GM12878 (cell line): ENCODE measurements at regions of chr1 and their contacts with region 1.

Region 1: DNA sequence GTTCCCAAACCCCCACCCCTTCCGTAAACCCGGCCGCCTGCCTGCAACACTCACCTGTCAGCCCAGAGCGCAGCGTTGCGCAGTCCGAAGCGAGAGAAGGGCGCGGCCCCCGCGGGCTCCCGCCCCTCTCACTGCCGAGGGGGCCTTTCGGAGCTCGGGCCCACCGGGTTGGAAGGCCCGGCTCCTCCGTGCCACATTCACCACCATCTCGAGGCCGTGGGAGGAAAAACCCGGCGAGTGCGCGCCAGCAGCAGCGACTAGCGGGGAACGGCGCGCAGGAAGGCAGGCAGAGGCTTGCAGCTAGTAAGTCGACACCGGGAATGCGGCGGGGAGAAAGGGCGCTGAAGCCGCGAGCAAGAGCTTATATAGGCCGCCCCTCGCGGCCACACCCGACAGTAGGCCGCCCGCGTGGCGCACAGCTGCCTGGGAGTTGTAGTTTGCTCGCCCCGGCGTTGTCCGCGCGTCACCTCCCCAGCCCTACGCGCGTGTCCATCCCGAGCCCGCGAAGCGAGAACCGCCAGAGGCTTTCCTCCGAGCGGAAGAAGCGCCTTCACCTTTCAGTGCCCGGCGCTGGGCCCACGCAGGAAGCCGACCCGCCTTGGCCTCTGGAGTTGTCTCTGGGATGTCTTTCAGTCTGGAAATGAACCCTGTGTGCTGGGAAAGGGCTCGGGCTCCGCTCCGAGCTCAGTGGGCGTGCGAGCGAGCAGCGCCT is 10.4 kb upstream of the RAB42 start:
- DNase-seq: peak; percentile 78
- ATAC-seq: peak; percentile 91
- H3K4me3 ChIP-seq: peak overlapping the region; percentile 99
- H3K27ac ChIP-seq: peak overlapping the region; percentile 55
- H3K4me1 ChIP-seq: peaks cover 14% of the 10 kb centered on the region
- H3K27me3 ChIP-seq: no peaks in the 10 kb centered on the region
- CTCF ChIP-seq: peak in 1 of 3 experiments; percentile 7; a peak in 1 of 6 replicates
- EP300 ChIP-seq: 0 out of 4 replicates have a peak, but pooled peaks of 1 of the 2 experiments have one; percentile 22
- POLR2A ChIP-seq: peak; percentile 100
- RAD21 ChIP-seq: no peak

Region 2: GRCh38 chr1:28235755-28236655 is 345.7 kb before region 1 on chr1 and contains the start of gene ATP5IF1:
- CTCF ChIA-PET with region 1: no interaction called
- POLR2A ChIA-PET with region 1: interaction called, 10 read pairs
- RAD21 ChIA-PET with region 1: interaction called, 3 read pairs
- SMC1A ChIA-PET with region 1: no interaction called
- in situ Hi-C with region 1: no loop called
- intact Hi-C with region 1: no loop called
- DNase-seq: peak; percentile 96
- ATAC-seq: peak; percentile 94
- H3K4me3 ChIP-seq: peak within 1 kb of the TSS; percentile 71
- H3K27ac ChIP-seq: peak within 1 kb of the TSS; percentile 86
- H3K4me1 ChIP-seq: peaks cover 10% of the 10 kb centered on the region
- H3K27me3 ChIP-seq: no peaks in the 10 kb centered on the region
- CTCF ChIP-seq: no peak
- EP300 ChIP-seq: no peak
- POLR2A ChIP-seq: peak; percentile 99
- RAD21 ChIP-seq: no peak
- polyA plus RNA-seq, gene ATP5IF1: 296 to 883 TPM

Region 3: DNA sequence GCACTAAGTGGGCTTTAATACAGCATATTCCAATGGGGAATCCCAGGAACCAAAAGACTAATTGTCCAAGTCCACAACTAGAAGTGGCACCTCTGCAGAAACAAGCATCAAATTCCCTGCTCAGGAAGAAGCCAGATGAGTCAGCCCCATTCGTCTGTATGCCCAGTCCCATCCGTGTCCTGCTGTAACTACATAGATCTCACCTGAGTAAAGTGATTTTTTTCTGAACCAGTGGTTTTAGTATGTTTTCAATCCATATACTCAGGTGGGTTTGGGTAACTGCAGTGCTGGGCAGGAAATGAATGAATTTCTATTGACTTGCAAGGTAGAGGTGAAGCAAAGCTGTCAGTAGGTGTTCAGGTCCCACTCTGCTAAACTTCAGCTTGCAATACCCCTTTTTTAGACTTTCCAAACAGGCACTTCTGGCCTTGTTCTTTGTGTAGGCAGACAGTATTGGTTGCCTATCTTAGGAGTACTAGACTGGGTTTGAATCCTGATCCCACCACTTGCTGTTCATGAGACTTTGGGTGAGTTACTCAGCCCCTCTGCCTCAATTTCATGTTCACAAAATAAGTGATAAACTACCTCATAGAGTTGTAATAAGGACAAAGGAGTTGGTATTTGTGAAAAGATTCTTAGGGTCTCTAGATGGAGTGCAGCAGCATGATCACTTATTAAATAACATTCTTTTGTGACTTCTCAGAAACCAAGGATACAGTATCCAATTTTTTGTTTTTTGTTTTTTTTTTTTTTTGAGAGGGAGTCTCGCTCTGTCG is 70.8 kb before region 1 on chr1:
- CTCF ChIA-PET with region 1: interaction called, 49 read pairs
- POLR2A ChIA-PET with region 1: interaction called, 81 read pairs
- RAD21 ChIA-PET with region 1: interaction called, 5 read pairs
- SMC1A ChIA-PET with region 1: interaction called, 47 read pairs
- in situ Hi-C with region 1: no loop called
- intact Hi-C with region 1: no loop called
- DNase-seq: no peak
- ATAC-seq: peak; percentile 11
- H3K4me3 ChIP-seq: peak overlapping the region; percentile 84
- H3K27ac ChIP-seq: peak overlapping the region; percentile 94
- H3K4me1 ChIP-seq: peaks cover 10% of the 10 kb centered on the region
- H3K27me3 ChIP-seq: no peaks in the 10 kb centered on the region
- CTCF ChIP-seq: no peak
- EP300 ChIP-seq: no peak
- POLR2A ChIP-seq: peak; percentile 67
- RAD21 ChIP-seq: no peak

Region 4: DNA sequence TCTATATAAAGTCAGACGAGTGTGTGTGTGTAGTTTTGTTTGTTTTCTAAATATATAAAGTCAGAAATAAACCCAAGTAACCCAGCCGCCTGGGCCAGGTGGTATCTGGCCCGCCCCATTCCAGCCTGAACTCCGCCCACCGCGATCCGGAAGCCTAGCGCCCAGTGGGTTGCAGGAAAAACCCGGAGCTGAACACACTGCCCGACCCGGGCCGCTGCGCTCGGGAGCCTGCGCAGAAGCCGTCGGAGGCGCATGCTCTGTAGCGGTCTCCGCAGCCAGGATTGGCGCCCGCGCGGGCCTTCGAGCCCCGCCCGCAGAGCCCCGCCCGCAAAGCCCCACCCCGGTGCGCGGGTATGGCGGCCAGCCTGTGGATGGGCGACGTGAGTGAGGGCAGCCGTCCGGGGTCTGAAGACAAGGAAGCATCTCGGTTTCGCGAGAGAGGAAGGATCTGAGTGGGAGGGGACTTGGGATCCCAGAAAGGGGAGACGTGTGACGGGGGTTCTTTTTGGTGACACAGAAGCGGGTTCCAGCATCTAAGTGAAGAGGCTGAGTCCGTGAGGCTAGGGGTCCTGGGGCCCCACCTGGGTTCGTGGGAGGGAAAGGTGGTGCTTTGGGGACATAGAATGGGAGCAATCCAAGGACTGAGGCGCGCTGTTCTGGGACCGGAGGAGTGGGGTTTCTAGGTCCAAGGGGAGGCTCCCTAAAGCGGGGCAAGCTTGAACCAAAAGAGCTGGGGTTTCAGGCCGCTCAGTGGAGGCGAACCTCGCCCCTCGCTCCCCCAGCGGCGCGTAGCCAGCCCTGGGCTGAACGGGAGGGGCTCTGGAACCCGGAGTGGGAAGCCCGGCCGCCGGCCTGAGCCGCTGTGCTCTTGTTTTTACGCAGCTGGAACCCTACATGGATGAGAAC is 28.7 kb before region 1 on chr1 and contains the start of gene TRNAU1AP:
- CTCF ChIA-PET with region 1: interaction called, 34 read pairs
- POLR2A ChIA-PET with region 1: interaction called, 132 read pairs
- RAD21 ChIA-PET with region 1: interaction called, 46 read pairs
- SMC1A ChIA-PET with region 1: interaction called, 18 read pairs
- in situ Hi-C with region 1: no loop called
- intact Hi-C with region 1: loop called (anchors 2 kb)
- DNase-seq: peak; percentile 91
- ATAC-seq: peak; percentile 95
- H3K4me3 ChIP-seq: peak within 1 kb of the TSS; percentile 87
- H3K27ac ChIP-seq: peak within 1 kb of the TSS; percentile 86
- H3K4me1 ChIP-seq: no peaks in the 10 kb centered on the region; the same call in none of the 2 replicates
- H3K27me3 ChIP-seq: no peaks in the 10 kb centered on the region
- CTCF ChIP-seq: no peak
- EP300 ChIP-seq: peak in 1 of 2 experiments; percentile 68; a peak in 1 of 4 replicates
- POLR2A ChIP-seq: peak; percentile 90
- RAD21 ChIP-seq: no peak
- polyA plus RNA-seq, gene TRNAU1AP: 53.1 to 53.8 TPM

Region 5: DNA sequence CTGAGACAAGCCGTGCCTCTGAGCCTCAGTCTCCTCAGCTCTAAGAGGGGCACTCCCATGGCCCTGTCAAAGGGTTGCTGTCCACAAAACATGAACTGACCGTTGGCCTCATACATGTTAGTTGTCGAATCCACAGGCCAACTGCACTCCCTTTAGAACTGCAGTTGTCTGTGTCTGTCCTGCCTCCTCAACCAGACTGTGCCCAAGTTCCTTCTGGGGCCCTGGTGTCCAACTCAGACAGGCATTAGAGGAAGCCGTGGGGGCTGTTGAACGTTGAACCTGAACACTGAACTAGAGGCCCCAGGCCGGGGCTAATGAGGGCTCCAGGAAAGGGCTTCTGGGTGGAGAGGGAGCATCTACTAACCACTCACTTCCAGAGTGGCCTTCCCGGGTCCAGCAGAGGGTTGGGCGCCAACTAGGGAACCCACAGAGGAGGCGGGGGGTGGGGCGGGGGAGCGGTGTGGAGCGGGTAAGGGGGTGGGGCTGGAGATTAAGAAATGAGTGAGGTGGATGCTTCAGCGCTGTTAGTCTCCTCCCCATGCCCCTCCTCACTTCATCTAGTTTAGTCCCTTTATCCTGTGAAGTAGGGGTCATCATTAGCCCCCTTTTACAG is 10.1 kb after region 1 on chr1 and contains the start of gene RAB42:
- CTCF ChIA-PET with region 1: interaction called, 4 read pairs
- POLR2A ChIA-PET with region 1: interaction called, 22 read pairs
- RAD21 ChIA-PET with region 1: interaction called, 108 read pairs
- SMC1A ChIA-PET with region 1: interaction called, 10 read pairs
- in situ Hi-C with region 1: no loop called
- intact Hi-C with region 1: no loop called
- DNase-seq: no peak
- ATAC-seq: peak; percentile 70
- H3K4me3 ChIP-seq: peak within 1 kb of the TSS; percentile 51; the same call in 1 of the 2 replicates
- H3K27ac ChIP-seq: no peak within 1 kb of the TSS
- H3K4me1 ChIP-seq: peaks cover under 1% of the 10 kb centered on the region
- H3K27me3 ChIP-seq: no peaks in the 10 kb centered on the region
- CTCF ChIP-seq: no peak
- EP300 ChIP-seq: no peak
- POLR2A ChIP-seq: no peak
- RAD21 ChIP-seq: no peak
- polyA plus RNA-seq, gene RAB42: 0.16 to 0.21 TPM

Region 6: GRCh38 chr1:28648474-28649198 is 66.9 kb after region 1 on chr1 and contains the start of gene RNU11:
- CTCF ChIA-PET with region 1: interaction called, 11 read pairs
- POLR2A ChIA-PET with region 1: interaction called, 9 read pairs
- RAD21 ChIA-PET with region 1: no interaction called
- SMC1A ChIA-PET with region 1: interaction called, 4 read pairs
- in situ Hi-C with region 1: no loop called
- intact Hi-C with region 1: loop called (anchors 2 kb)
- DNase-seq: peak; percentile 97
- ATAC-seq: peak; percentile 85
- H3K4me3 ChIP-seq: peak within 1 kb of the TSS; percentile 55; the same call in 1 of the 2 replicates
- H3K27ac ChIP-seq: peak within 1 kb of the TSS; percentile 99
- H3K4me1 ChIP-seq: peaks cover 11% of the 10 kb centered on the region
- H3K27me3 ChIP-seq: no peaks in the 10 kb centered on the region
- CTCF ChIP-seq: no peak
- EP300 ChIP-seq: 0 out of 4 replicates have a peak, but pooled peaks have one; percentile 37 to 54
- POLR2A ChIP-seq: peak; percentile 97
- RAD21 ChIP-seq: no peak
- polyA plus RNA-seq, gene RNU11: not detected

Region 7: GRCh38 chr1:29719253-29719652 is 1137.6 kb after region 1 on chr1:
- CTCF ChIA-PET with region 1: no interaction called
- POLR2A ChIA-PET with region 1: no interaction called
- RAD21 ChIA-PET with region 1: no interaction called
- SMC1A ChIA-PET with region 1: no interaction called
- in situ Hi-C with region 1: no loop called
- intact Hi-C with region 1: no loop called
- DNase-seq: no peak
- ATAC-seq: no peak
- H3K4me3 ChIP-seq: no peak overlapping the region
- H3K27ac ChIP-seq: no peak overlapping the region
- H3K4me1 ChIP-seq: no peaks in the 10 kb centered on the region
- H3K27me3 ChIP-seq: no peaks in the 10 kb centered on the region
- CTCF ChIP-seq: no peak
- EP300 ChIP-seq: no peak
- POLR2A ChIP-seq: no peak
- RAD21 ChIP-seq: no peak